PC-3 (cell line): ENCODE measurements at regions of chr7 and their contacts with region 1.

Region 1: DNA sequence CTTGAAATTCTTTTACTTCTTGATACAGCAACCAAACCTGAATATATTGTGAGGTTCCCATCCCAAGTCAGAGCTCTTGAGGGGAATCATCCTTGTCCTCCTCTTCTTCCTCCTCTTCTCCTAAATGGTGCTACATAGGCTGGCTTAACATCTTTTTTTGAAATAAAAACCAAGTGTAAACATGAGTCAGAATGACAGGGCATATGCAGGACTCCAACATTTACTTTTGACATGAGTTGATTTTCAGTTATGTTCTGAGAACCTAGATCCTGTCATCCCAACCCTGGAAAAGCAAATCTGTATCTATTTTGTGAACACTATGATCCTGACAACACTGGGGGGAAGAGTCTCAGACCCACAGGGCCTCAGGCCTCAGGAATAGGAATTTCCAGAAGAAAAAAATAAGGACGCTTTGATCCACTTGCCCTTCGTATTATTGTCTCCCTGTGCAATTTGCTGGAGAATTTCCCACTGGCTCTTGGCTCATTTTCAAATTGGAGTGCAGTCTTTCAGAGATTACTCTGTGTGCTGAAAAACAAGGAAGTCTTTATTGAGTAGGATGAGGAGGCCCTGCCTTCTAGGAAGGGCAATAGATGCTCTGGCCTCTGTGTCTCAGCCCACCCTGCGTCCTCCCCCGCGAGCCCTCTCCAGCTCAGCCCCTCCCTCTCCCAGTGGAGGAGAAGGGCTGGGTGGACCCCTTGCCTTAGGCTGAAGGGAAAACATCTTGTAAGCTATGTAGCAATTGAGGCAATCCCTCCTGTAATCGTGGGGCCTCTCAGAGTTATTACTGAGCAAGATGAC is 121.6 kb downstream of the CREB5 start:
- DNase-seq: peak; percentile 79
- ATAC-seq: peak; percentile 89
- H3K4me3 ChIP-seq: peak overlapping the region; percentile 28; the same call in 1 of the 2 replicates
- H3K27ac ChIP-seq: peak overlapping the region; percentile 83
- H3K4me1 ChIP-seq: peaks cover 35% of the 10 kb centered on the region
- H3K27me3 ChIP-seq: no peaks in the 10 kb centered on the region
- CTCF ChIP-seq: no peak

Region 2: DNA sequence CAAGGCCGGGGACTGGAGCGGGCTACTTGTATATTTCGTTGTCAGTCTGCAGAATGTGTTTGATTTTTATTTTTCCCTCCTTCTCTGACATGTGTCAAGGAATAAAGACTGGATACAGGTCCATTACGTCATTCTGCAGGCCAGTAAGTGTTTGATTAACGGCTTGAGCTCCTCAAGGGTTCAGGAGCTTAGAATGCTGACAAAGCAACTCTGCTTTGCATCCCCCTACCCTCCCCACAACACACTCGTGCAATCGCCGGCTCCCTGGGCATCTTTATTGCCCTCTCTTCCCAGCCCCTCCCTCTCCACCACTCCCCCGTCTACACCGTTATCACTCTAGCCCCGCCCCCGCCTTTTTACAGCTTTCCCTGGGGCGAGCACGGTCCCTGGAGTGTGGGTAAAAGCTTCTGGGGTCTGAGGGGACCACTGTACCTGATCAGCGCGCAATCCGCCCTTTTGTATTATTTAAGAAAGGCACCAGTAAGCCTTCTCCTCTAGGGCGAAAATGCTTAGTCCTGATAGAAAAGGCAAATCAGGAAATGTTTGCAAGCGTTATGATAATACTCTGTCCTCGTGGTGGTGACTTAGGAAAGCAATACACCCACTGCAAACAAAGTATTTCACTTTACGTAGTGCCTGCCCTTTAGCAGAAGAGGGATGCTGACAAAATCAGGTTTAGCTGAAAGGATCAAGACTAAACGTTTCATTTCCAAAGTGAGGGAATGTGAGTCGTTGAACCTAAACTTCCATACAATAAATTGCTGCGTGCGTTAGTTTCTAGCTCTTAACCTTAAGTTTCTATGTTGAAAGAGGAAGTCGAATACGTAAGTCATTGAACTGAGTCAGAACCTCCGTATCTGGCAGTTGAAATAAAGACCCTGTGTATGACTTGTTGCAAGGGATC is 123.1 kb before region 1 on chr7:
- CTCF ChIA-PET with region 1: no interaction called
- POLR2A ChIA-PET with region 1: no interaction called
- intact Hi-C with region 1: loop called (anchors 5 kb)
- DNase-seq: peak; percentile 37
- ATAC-seq: 0 out of 2 replicates have a peak, but pooled peaks have one; percentile 5
- H3K4me3 ChIP-seq: peak overlapping the region; percentile 87
- H3K27ac ChIP-seq: no peak overlapping the region
- H3K4me1 ChIP-seq: peaks cover 28% of the 10 kb centered on the region
- H3K27me3 ChIP-seq: peaks cover 33% of the 10 kb centered on the region
- CTCF ChIP-seq: no peak

Region 3: GRCh38 chr7:28573059-28573553 is 39.2 kb after region 1 on chr7:
- CTCF ChIA-PET with region 1: no interaction called
- POLR2A ChIA-PET with region 1: no interaction called
- intact Hi-C with region 1: loop called (anchors 5 kb)
- DNase-seq: peak; percentile 88
- ATAC-seq: peak; percentile 66
- H3K4me3 ChIP-seq: no peak overlapping the region; the same call in 1 of the 2 replicates
- H3K27ac ChIP-seq: peak overlapping the region; percentile 15
- H3K4me1 ChIP-seq: peaks cover 46% of the 10 kb centered on the region
- H3K27me3 ChIP-seq: no peaks in the 10 kb centered on the region; the same call in 1 of the 2 replicates
- CTCF ChIP-seq: no peak

Region 4: GRCh38 chr7:28587211-28587610 is 53.3 kb after region 1 on chr7:
- CTCF ChIA-PET with region 1: interaction called, 5 read pairs
- POLR2A ChIA-PET with region 1: no interaction called
- intact Hi-C with region 1: loop called (anchors 5 kb)
- DNase-seq: peak; percentile 65
- ATAC-seq: peak; percentile 85
- H3K4me3 ChIP-seq: no peak overlapping the region; the same call in 1 of the 2 replicates
- H3K27ac ChIP-seq: peak overlapping the region; percentile 65
- H3K4me1 ChIP-seq: peaks cover 26% of the 10 kb centered on the region
- H3K27me3 ChIP-seq: peaks cover 7% of the 10 kb centered on the region
- CTCF ChIP-seq: no peak